Activated naive CD4-positive, alpha-beta T cell treated with anti-CD3 and anti-CD28 coated beads for 36 hours (primary cell): ENCODE measurements at regions of chr11 and their contacts with region 1.

Region 1: DNA sequence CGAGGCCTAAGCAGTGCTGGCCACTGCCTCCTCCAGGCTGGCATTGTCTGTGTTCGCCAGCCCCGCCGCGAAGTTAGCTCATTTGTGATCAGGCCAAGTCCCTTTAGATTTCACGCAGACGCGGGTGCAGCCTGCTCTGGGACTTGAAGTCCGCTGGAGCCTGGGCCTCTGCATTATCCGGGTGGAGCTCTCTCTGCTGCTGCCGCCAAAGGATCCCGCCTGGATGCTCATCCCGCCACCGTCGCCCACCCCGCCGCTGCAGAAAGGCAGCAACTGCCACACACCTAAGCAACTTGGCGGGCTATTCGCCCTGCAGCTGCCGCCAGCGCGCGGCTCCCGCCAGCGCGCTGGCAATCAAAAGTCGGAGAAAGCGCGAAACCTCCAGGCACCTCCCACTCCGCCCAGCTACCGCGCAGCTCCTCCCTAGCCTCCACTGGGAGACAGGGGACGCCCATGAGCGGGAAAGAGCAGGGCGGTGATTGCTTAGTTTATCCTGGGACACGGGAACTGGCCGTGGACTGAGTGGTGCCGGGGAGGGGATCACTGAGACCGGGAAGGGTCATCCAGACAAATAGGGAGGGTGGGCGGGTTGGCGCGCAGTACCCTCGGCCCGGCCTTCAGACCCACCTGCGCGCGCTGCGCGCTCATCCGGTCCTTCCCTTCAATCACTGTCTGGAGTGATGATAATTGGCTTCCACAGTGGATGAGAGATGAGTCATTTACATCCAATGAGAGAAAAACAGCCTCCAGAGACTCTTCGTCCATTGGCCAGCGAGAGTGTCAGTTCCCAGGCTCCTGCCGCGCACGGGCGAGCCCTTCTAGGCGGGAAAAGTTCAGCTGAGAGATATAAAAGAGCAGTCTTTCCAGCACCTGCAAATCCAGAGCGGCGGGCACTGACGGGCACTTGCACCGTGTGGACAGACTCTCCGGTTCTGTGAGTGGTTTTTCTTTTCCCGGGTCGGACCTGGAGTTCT is at the start of gene FAM111B:
- DNase-seq: peak; percentile 88
- H3K4me3 Mint-ChIP-seq: peak within 1 kb of the TSS; percentile 87
- H3K27ac Mint-ChIP-seq: peak within 1 kb of the TSS; percentile 76
- H3K4me1 Mint-ChIP-seq: peaks cover 41% of the 10 kb centered on the region
- H3K27me3 Mint-ChIP-seq: peaks cover 61% of the 10 kb centered on the region
- total RNA-seq, gene FAM111B: 21.6 to 22.6 TPM

Region 2: GRCh38 chr11:58923300-58923788 is 183.3 kb before region 1 on chr11:
- CTCF ChIA-PET with region 1: no interaction called
- intact Hi-C with region 1: loop called (anchors 1 kb)
- DNase-seq: peak; percentile 61
- H3K4me3 Mint-ChIP-seq: no peak overlapping the region
- H3K27ac Mint-ChIP-seq: peak overlapping the region; percentile 11
- H3K4me1 Mint-ChIP-seq: peaks cover 25% of the 10 kb centered on the region
- H3K27me3 Mint-ChIP-seq: no peaks in the 10 kb centered on the region

Region 3: GRCh38 chr11:59053387-59053786 is 53.3 kb before region 1 on chr11:
- CTCF ChIA-PET with region 1: interaction called, 10 read pairs
- intact Hi-C with region 1: loop called (anchors 1 kb)
- DNase-seq: peak; percentile 88
- H3K4me3 Mint-ChIP-seq: no peak overlapping the region
- H3K27ac Mint-ChIP-seq: no peak overlapping the region
- H3K4me1 Mint-ChIP-seq: peaks cover 3% of the 10 kb centered on the region
- H3K27me3 Mint-ChIP-seq: peaks cover 22% of the 10 kb centered on the region

Region 4: DNA sequence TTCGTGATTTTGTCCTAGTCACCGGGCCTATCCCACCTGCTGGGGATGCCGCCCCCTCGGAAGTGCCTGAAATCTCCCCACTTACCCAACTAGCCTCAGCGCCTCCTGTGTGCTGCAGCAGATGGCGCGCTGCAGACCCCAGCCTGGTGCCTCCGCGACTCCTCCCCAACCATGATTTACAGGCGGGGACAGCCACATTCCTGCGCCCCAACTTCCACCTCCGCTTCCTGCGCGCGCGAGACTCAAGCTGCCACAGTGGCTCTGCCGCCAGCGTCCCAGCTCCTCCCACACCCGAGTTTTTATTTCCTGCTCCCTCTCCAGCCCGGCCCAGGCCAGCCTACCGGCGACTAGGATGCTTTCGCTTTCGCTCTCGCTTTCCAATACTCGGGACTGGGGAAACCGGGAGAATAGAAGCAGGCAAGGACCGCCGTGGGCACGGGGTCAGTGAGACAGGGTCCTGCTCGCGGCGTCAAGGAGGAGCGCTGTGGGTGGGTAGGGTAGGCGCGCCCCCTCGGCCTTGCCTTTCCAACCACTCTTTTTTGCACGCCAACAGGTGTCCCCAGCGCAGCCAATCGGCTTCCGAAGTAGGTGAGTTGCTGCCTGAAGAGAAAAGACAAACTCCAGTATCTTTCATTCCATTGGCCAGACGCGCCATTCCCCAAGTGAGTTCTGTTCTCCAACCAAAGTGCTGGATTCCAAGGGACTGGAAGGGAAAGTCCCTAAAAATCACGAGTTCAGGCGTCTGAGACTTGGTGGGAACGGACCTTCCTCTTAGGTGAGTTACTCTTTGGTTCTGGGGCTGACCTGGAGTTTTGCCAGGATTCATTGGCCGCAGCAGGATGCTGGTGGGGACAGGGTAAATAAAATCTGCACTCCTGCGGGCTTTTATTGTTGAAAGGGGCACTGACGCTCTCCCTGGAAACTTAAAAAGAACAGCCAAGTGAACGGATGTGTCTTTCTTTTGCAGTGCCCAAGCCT is 36.2 kb after region 1 on chr11 and contains the start of gene FAM111A:
- CTCF ChIA-PET with region 1: interaction called, 7 read pairs
- intact Hi-C with region 1: loop called (anchors 1 kb)
- DNase-seq: peak; percentile 88
- H3K4me3 Mint-ChIP-seq: peak within 1 kb of the TSS; percentile 95
- H3K27ac Mint-ChIP-seq: peak within 1 kb of the TSS; percentile 91
- H3K4me1 Mint-ChIP-seq: peaks cover 40% of the 10 kb centered on the region
- H3K27me3 Mint-ChIP-seq: no peaks in the 10 kb centered on the region
- total RNA-seq, gene FAM111A: 98.3 to 99.4 TPM

Region 5: GRCh38 chr11:59197991-59198390 is 91.3 kb after region 1 on chr11:
- CTCF ChIA-PET with region 1: no interaction called
- intact Hi-C with region 1: loop called (anchors 2 kb)
- DNase-seq: no peak
- H3K4me3 Mint-ChIP-seq: no peak overlapping the region
- H3K27ac Mint-ChIP-seq: no peak overlapping the region
- H3K4me1 Mint-ChIP-seq: peaks cover 15% of the 10 kb centered on the region
- H3K27me3 Mint-ChIP-seq: peaks cover 17% of the 10 kb centered on the region

Region 6: GRCh38 chr11:59615637-59616395 is 509.2 kb after region 1 on chr11 and contains the start of gene OSBP:
- CTCF ChIA-PET with region 1: no interaction called
- intact Hi-C with region 1: loop called (anchors 10 kb)
- DNase-seq: peak; percentile 99
- H3K4me3 Mint-ChIP-seq: peak within 1 kb of the TSS; percentile 81
- H3K27ac Mint-ChIP-seq: peak within 1 kb of the TSS; percentile 86
- H3K4me1 Mint-ChIP-seq: peaks cover 35% of the 10 kb centered on the region
- H3K27me3 Mint-ChIP-seq: no peaks in the 10 kb centered on the region
- total RNA-seq, gene OSBP: 33.9 to 37.0 TPM